HepG2 (cell line): ENCODE measurements at regions of chr16 and their contacts with region 1.

Region 1: DNA sequence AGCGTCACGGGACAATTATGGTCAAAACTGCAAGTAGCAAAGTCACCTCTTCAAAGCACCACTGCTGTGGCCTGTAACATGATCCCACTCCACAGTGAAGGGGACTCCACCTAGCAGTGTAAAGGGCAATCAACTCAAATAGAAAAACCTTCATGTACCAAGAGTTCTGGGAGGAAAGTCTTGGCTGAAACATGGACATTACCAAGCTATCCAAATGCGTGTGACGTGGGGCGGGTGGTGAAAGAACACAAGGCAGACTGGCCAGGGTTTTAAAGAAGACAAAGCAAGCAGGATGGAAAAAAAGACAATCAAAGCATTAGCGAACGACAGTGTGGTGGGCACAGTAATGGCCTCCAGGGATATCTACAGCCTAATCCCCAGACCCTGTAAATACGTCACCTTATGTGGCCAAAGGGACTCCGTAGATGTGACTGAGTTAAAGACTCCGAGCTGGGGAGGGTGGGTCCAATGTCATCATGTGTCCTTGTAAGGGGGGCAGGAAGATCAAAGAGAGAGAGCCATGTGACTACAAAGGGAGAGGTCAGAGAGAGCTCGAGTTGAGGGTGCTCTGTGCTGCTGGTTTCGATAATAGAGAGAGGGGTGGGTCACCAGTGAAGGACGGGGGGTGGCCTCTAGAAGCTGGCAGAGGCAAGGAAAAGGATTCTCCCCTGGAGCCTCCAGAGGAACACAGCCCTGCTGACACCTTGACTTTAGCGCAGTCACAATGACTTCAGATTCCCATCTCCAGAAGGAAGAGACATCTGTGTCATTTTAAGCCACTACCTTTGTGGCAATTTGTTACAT is 6.0 kb downstream of the HSDL1 start:
- DNase-seq: peak; percentile 97
- ATAC-seq: peak; percentile 88
- H3K4me3 ChIP-seq: peak overlapping the region; percentile 57 to 68 (median 59)
- H3K27ac ChIP-seq: peak overlapping the region; percentile 98
- H3K4me1 ChIP-seq: peaks cover 83% of the 10 kb centered on the region
- H3K27me3 ChIP-seq: no peaks in the 10 kb centered on the region
- CTCF ChIP-seq: no peak
- EP300 ChIP-seq: peak in 1 of 2 experiments; percentile 67; a peak in 2 of 4 replicates
- POLR2A ChIP-seq: peak; percentile 67 to 81
- RAD21 ChIP-seq: no peak

Region 2: DNA sequence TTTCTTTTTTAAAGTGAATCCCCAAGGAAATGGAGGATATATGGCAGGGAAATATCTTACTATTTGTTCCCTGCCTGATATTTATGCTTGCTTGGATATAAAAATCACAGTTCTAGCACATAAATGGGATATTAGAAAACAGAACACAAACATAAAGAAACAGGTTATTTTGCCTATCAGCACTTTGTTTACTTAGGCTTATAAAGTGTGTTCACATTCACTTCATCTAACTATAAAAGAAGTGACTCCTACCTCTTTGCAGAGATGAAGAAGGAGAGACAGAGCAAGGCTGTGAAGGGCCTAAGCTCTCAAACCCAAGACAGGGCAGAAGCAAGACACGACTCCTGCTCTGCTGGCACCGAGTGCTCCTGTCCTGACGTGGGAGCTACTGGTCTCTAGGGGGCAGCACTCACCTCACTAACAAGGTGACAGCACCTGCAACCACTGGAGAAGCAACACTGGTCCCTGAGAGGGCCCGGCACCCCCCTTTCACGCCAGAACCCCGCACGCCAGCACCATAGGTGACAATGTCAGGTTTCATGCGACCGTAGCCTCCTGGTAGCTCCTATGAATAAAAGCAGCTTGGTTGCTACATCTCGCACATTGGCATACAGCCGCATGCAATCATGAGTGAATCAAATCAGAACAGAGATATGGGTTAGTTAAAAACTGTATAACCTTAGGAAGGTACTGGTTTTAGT is 54.3 kb before region 1 on chr16:
- CTCF ChIA-PET with region 1: interaction called, 29 read pairs
- POLR2A ChIA-PET with region 1: interaction called, 4 read pairs
- in situ Hi-C with region 1: no loop called
- intact Hi-C with region 1: loop called (anchors 1 kb)
- DNase-seq: peak; percentile 78
- ATAC-seq: peak; percentile 96
- H3K4me3 ChIP-seq: no peak overlapping the region
- H3K27ac ChIP-seq: no peak overlapping the region
- H3K4me1 ChIP-seq: no peaks in the 10 kb centered on the region
- H3K27me3 ChIP-seq: no peaks in the 10 kb centered on the region
- CTCF ChIP-seq: peak; percentile 97
- EP300 ChIP-seq: no peak
- POLR2A ChIP-seq: 0 out of 4 replicates have a peak, but pooled peaks of 1 of the 2 experiments have one; percentile 17
- RAD21 ChIP-seq: peak; percentile 89

Region 3: GRCh38 chr16:84096115-84097012 is 42.7 kb before region 1 on chr16:
- CTCF ChIA-PET with region 1: interaction called, 3 read pairs
- POLR2A ChIA-PET with region 1: interaction called, 6 read pairs
- in situ Hi-C with region 1: no loop called
- intact Hi-C with region 1: loop called (anchors 1 kb)
- DNase-seq: peak; percentile 95
- ATAC-seq: peak; percentile 100
- H3K4me3 ChIP-seq: no peak overlapping the region
- H3K27ac ChIP-seq: no peak overlapping the region
- H3K4me1 ChIP-seq: peaks cover 19% of the 10 kb centered on the region
- H3K27me3 ChIP-seq: no peaks in the 10 kb centered on the region
- CTCF ChIP-seq: no peak
- EP300 ChIP-seq: peak; percentile 67 to 72; a peak in 3 of 4 replicates
- POLR2A ChIP-seq: no peak
- RAD21 ChIP-seq: 0 out of 2 replicates have a peak, but pooled peaks have one; percentile 9

Region 4: DNA sequence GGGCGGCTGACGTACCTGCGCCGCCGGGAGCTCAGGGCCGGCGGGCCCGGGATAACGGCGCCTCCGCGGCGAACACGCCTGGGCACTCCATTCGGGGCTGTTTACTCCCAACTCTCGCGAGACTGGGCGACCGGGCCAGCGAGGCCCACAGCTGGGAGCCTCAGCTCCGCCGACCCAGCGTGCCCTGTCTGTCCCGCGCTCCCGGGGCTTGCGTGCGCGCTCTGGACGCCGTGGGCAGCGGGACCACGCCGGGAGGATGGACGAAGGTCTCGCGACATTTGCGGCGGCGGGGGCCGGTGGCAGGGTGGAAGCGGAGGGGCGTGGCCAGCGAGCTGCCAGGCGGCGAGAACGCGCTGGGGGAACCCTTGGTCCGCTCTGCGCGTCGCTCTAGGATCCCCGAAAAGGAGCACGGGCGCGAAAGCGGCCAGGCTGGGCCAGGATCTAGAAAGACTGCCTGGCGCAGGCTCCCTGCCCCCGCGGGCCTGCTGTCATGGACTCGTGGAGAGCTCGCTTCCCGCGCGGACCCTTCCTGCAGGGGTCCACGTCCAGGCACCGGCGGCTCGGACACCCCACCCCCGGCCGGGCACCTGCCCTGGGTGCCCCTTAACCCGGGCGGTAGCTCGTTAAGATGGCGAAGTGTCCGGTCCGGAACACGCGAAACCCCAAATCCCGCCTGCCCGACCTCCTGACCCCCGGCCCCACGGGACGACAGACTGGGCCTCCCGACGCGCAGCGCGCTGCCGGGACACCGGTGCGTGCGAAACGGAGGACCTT is 22.1 kb before region 1 on chr16 and contains the start of gene MBTPS1:
- CTCF ChIA-PET with region 1: interaction called, 5 read pairs
- POLR2A ChIA-PET with region 1: interaction called, 142 read pairs
- in situ Hi-C with region 1: no loop called
- intact Hi-C with region 1: loop called (anchors 1 kb)
- DNase-seq: peak; percentile 97
- ATAC-seq: peak; percentile 96
- H3K4me3 ChIP-seq: peak within 1 kb of the TSS; percentile 92 to 99 (median 93)
- H3K27ac ChIP-seq: peak within 1 kb of the TSS; percentile 85
- H3K4me1 ChIP-seq: peaks cover 30% of the 10 kb centered on the region
- H3K27me3 ChIP-seq: peaks cover 0 to 3% of the 10 kb centered on the region in 2 experiments; a peak in 1 of 5 replicates
- CTCF ChIP-seq: peak; percentile 32
- EP300 ChIP-seq: no peak; a peak in 1 of 4 replicates
- POLR2A ChIP-seq: peak; percentile 92 to 95
- RAD21 ChIP-seq: peak; percentile 37
- total RNA-seq, gene MBTPS1: 42.0 and 56.7 TPM in 2 replicates

Region 5: GRCh38 chr16:84220851-84221250 is 81.8 kb after region 1 on chr16:
- CTCF ChIA-PET with region 1: no interaction called
- POLR2A ChIA-PET with region 1: no interaction called
- in situ Hi-C with region 1: no loop called
- intact Hi-C with region 1: no loop called
- DNase-seq: no peak
- ATAC-seq: no peak
- H3K4me3 ChIP-seq: no peak overlapping the region
- H3K27ac ChIP-seq: no peak overlapping the region
- H3K4me1 ChIP-seq: no peaks in the 10 kb centered on the region
- H3K27me3 ChIP-seq: peaks cover 2 to 50% of the 10 kb centered on the region in 2 experiments; a peak in 4 of 5 replicates
- CTCF ChIP-seq: no peak
- EP300 ChIP-seq: no peak
- POLR2A ChIP-seq: no peak
- RAD21 ChIP-seq: no peak